ENCODE measurements at regions of chr3 and their contacts with region 1.

Region 1: GRCh38 chr3:186540221-186540834 is 3.9 kb downstream of the CRYGS start:
- DNase-seq: no peak
- H3K4me3 ChIP-seq: peak overlapping the region in 2 of 8 donors; percentile 0 to 32
- H3K27ac ChIP-seq: no peak overlapping the region
- H3K4me1 ChIP-seq: peaks cover 4 to 11% (median 9%) of the 10 kb centered on the region in 6 donors
- H3K27me3 ChIP-seq: no peaks in the 10 kb centered on the region
- CTCF ChIP-seq: peak; percentile 66 to 91 (median 87)
- POLR2A ChIP-seq: no peak

Region 2: DNA sequence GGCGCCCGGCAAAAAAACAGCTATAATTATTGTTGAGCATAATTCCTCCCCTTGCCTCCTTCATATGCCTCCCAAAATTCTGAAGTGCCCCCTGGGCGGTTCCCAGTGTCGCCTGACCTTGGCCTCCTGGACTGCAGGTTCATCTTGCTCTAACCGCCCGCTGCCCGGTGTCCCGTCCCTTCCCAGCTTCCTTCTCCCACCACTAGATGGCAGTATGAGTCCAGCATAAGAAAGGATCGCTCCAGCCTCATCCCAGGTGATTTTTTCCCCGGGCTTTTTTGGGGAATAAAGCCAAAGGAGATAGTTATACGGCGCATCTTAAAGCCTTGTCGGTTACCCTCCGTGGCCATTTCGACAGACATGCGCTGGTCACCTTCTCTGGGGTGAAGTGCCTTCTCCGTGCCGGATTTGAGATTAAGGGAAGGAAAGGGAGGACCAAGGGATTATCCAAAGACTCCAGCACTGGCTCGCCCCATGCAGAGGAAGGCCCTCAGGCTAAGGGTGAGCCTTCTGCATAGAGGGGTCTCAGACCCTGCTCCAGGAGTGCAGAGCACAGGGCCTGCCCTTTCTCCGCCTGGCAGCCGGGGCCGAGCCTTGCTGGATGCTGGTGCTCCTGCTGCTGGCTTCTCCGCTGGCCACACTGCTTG is 556.7 kb before region 1 on chr3:
- intact Hi-C with region 1: loop called (anchors 2 kb)
- DNase-seq: peak; percentile 86
- H3K4me3 ChIP-seq: no peak overlapping the region
- H3K27ac ChIP-seq: no peak overlapping the region
- H3K4me1 ChIP-seq: peaks cover 2 to 11% (median 7%) of the 10 kb centered on the region in 6 donors
- H3K27me3 ChIP-seq: peaks cover 0 to 31% (median 11%) of the 10 kb centered on the region in 7 donors
- CTCF ChIP-seq: peak; percentile 71 to 96 (median 90)
- POLR2A ChIP-seq: no peak

Region 3: DNA sequence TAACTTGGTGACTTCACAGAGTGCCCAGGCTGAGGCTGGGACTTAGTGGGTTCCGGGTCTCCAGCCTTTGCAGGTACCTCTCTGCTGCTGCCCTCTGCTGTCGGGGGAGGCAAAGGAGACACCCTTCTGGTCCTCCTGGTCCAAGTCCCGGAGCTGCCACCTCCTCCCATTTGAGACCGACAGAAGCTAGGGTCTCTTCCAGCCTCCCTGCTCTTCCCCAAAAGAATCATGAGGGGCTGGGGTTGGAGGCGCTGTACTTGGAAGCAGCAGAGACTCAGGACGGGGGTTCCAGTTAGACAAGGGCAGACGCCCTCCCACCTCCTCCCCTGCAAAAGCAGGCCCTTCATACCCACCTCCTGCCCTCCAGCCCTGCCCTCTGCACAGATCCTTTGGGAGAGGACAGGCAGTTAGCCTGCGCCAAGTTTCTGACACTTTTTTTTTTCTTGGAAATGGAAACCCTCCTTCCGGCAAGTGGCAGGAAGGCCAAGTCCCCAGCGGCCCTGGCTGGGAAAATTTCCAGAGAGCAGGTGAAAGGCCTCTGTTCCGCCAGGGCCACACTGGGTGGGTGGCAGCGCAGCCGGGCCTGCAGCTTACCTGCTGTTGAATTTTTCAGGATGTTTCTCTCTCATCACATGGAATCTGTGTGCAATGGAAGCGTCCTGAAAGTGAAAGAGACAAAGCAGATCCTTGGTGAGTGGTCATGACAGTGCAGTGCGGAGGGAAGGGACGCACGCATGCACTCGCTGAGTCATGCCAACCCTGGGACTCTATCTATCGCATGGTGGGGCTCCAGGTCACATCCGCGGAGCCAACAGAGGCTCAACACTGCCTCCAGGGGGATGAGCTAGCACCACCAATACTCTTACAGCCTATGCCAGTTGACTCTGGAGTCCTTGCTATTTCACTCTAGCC is 298.2 kb before region 1 on chr3:
- intact Hi-C with region 1: no loop called
- DNase-seq: peak; percentile 88
- H3K4me3 ChIP-seq: peak overlapping the region in 7 of 8 donors; percentile 2 to 61 (median 21)
- H3K27ac ChIP-seq: peak overlapping the region in 6 of 8 donors; percentile 5 to 73 (median 40)
- H3K4me1 ChIP-seq: peaks cover 6 to 21% (median 14%) of the 10 kb centered on the region in 6 donors
- H3K27me3 ChIP-seq: no peaks in the 10 kb centered on the region
- CTCF ChIP-seq: peak in 9 of 11 experiments; percentile 23 to 61 (median 50)
- POLR2A ChIP-seq: no peak

Region 4: GRCh38 chr3:186259612-186260383 is 280.5 kb before region 1 on chr3:
- intact Hi-C with region 1: loop called (anchors 2 kb)
- DNase-seq: peak; percentile 93
- H3K4me3 ChIP-seq: peak overlapping the region in 1 of 8 donors; percentile 17
- H3K27ac ChIP-seq: no peak overlapping the region
- H3K4me1 ChIP-seq: peaks cover 5 to 30% (median 14%) of the 10 kb centered on the region in 6 donors
- H3K27me3 ChIP-seq: no peaks in the 10 kb centered on the region
- CTCF ChIP-seq: peak; percentile 58 to 90 (median 73)
- POLR2A ChIP-seq: no peak